CD4-positive, alpha-beta memory T cell (primary cell): ENCODE measurements at regions of chr11 and their contacts with region 1.

Region 1: DNA sequence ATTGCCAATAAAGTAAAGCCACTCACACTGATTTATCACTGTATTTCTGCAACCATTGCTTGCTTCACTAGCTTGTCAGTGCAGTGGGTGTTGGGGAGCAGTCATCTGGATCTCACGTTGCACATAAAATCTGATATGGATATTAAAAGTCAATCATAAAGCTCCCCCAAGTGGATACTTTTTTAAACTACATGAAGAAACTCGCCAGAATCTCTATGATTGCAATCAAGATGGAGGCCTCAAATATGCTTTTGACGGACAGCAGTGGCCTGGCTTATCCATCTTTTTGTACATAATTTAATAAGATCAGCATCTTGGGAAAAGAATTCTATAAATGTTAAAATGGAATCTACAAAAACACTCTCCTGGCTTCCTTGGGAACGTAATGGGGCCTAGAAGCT is 137.7 kb downstream of the WT1 start:
- DNase-seq: peak in 4 of 5 donors; percentile 6 to 10 (median 7)
- H3K4me3 ChIP-seq: no peak overlapping the region
- H3K4me3 Mint-ChIP-seq: no peak overlapping the region
- H3K27ac ChIP-seq: no peak overlapping the region
- H3K27ac Mint-ChIP-seq: no peak overlapping the region
- H3K4me1 ChIP-seq: no peaks in the 10 kb centered on the region
- H3K4me1 Mint-ChIP-seq: no peaks in the 10 kb centered on the region
- H3K27me3 ChIP-seq: no peaks in the 10 kb centered on the region
- H3K27me3 Mint-ChIP-seq: peaks cover 0 to under 1% of the 10 kb centered on the region in 2 donors

Region 2: GRCh38 chr11:31856248-31856647 is 441.4 kb before region 1 on chr11:
- CTCF ChIA-PET with region 1: no interaction called
- POLR2A ChIA-PET with region 1: no interaction called
- intact Hi-C with region 1: no loop called
- DNase-seq: no peak
- H3K4me3 ChIP-seq: no peak overlapping the region
- H3K4me3 Mint-ChIP-seq: no peak overlapping the region
- H3K27ac ChIP-seq: no peak overlapping the region
- H3K27ac Mint-ChIP-seq: no peak overlapping the region
- H3K4me1 ChIP-seq: no peaks in the 10 kb centered on the region
- H3K4me1 Mint-ChIP-seq: no peaks in the 10 kb centered on the region
- H3K27me3 ChIP-seq: no peaks in the 10 kb centered on the region
- H3K27me3 Mint-ChIP-seq: peaks cover 10% of the 10 kb centered on the region in 2 donors

Region 3: DNA sequence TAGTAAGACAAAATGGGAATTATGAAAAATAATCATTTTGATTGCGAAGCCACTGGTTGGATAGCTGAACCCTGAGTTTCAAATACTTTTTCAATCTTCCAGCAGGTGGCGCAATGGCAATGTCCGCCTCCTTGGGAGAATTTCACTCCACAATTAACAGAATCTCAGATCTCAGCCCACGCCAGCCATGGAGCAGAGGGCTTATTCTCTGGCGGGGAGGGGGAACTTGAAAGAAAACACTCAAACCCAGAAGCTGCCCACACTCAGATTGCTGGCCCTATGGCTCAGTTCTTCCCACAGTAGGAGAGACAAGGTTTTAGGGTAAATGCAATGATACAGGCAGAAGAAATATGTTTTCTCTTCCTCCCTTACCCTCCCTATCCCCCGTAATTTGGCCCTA is 245.4 kb before region 1 on chr11:
- CTCF ChIA-PET with region 1: interaction called, 15 read pairs
- POLR2A ChIA-PET with region 1: no interaction called
- intact Hi-C with region 1: no loop called
- DNase-seq: peak; percentile 25 to 48 (median 41)
- H3K4me3 ChIP-seq: no peak overlapping the region
- H3K4me3 Mint-ChIP-seq: no peak overlapping the region
- H3K27ac ChIP-seq: no peak overlapping the region
- H3K27ac Mint-ChIP-seq: no peak overlapping the region
- H3K4me1 ChIP-seq: no peaks in the 10 kb centered on the region
- H3K4me1 Mint-ChIP-seq: no peaks in the 10 kb centered on the region
- H3K27me3 ChIP-seq: no peaks in the 10 kb centered on the region
- H3K27me3 Mint-ChIP-seq: peaks cover 17 to 26% of the 10 kb centered on the region in 2 donors

Region 4: DNA sequence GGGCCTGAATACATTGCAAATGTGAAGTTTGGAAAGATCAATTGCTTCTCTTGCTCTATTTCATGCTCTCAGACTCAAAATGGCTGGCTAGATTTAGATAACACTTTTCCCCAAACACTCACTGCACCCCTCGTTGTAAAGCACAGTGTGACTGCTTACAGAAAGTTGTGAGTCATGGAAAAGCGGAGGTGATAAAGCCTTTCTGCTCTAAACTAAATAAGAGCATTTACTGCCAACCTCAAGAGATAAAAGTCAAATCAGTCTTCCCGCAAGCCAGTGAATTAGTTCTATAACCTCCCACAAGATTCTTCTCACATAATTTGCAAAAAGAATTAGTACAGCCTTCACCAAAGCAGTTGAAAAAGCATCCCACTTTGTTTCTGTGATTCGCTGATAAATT is 31.0 kb before region 1 on chr11:
- CTCF ChIA-PET with region 1: no interaction called
- POLR2A ChIA-PET with region 1: no interaction called
- intact Hi-C with region 1: no loop called
- DNase-seq: no peak
- H3K4me3 ChIP-seq: no peak overlapping the region
- H3K4me3 Mint-ChIP-seq: no peak overlapping the region
- H3K27ac ChIP-seq: no peak overlapping the region
- H3K27ac Mint-ChIP-seq: no peak overlapping the region
- H3K4me1 ChIP-seq: no peaks in the 10 kb centered on the region
- H3K4me1 Mint-ChIP-seq: no peaks in the 10 kb centered on the region
- H3K27me3 ChIP-seq: no peaks in the 10 kb centered on the region
- H3K27me3 Mint-ChIP-seq: peaks cover 8 to 13% of the 10 kb centered on the region in 2 donors

Region 5: GRCh38 chr11:32279672-32280071 is 17.9 kb before region 1 on chr11:
- CTCF ChIA-PET with region 1: interaction called, 11 read pairs
- POLR2A ChIA-PET with region 1: no interaction called
- intact Hi-C with region 1: no loop called
- DNase-seq: no peak
- H3K4me3 ChIP-seq: no peak overlapping the region
- H3K4me3 Mint-ChIP-seq: no peak overlapping the region
- H3K27ac ChIP-seq: no peak overlapping the region
- H3K27ac Mint-ChIP-seq: no peak overlapping the region
- H3K4me1 ChIP-seq: no peaks in the 10 kb centered on the region
- H3K4me1 Mint-ChIP-seq: no peaks in the 10 kb centered on the region
- H3K27me3 ChIP-seq: no peaks in the 10 kb centered on the region
- H3K27me3 Mint-ChIP-seq: peaks cover 12 to 18% of the 10 kb centered on the region in 2 donors